Aorta (tissue), 5 donors: ENCODE measurements at regions of chr1 and their contacts with region 1.

Region 1: GRCh38 chr1:40939320-40940059 is 40.0 kb upstream of the CTPS1 start:
- DNase-seq: no peak
- ATAC-seq: peak; percentile 87
- H3K4me3 ChIP-seq: no peak overlapping the region
- H3K27ac ChIP-seq: no peak overlapping the region
- H3K4me1 ChIP-seq: peaks cover 0 to 5% of the 10 kb centered on the region in 2 donors
- H3K27me3 ChIP-seq: no peaks in the 10 kb centered on the region

Region 2: DNA sequence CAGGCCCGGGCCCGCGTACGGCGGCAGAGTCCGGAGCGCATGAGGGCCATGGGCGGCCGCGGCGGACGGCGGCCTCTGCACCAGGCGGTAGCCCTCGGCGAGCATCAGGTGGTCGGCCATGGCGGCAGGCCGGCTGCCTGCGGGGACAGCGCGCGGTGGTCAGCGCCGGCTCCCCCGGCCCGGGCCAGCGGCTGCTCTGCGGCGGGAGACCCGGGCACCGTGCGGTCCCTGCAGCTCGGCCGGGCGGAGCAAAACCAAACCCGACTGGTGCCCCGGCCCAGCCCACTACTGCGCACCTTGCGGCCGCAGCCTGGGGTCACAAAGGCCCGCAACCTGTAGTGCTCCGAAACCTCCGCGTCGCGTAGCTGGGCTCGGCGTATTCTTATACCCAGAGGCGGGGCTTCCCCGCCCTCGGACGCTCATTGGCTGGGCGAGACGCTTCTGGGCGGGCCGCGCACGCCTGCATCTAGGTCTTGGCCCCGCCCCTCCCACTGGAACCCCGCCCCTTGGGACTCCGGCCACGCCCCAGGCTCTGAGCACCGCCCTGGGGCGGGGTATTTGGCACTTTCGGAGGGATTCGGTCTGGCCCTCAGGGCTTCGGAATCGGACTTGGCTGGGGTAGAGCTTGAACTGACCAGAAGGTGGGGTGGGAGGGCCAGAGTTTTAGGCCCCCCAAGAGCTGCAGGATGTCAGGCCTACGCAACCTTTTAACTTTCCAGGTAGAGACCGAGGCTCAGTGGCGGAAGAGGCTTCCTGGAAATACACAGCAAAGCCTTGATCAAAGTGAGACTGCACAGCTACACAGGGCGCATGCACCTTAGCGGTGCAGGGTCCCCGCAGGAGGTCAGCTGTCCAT is 77.3 kb before region 1 on chr1 and contains the start of gene CITED4:
- intact Hi-C with region 1: loop called in 1 of 2 experiments (anchors 2 kb)
- DNase-seq: peak; percentile 97 to 99
- ATAC-seq: peak; percentile 96
- H3K4me3 ChIP-seq: peak within 1 kb of the TSS; percentile 36 to 92
- H3K27ac ChIP-seq: peak within 1 kb of the TSS; percentile 28 to 81
- H3K4me1 ChIP-seq: no peaks in the 10 kb centered on the region
- H3K27me3 ChIP-seq: no peaks in the 10 kb centered on the region
- total RNA-seq, gene CITED4: 13.2 to 19.0 TPM

Region 3: DNA sequence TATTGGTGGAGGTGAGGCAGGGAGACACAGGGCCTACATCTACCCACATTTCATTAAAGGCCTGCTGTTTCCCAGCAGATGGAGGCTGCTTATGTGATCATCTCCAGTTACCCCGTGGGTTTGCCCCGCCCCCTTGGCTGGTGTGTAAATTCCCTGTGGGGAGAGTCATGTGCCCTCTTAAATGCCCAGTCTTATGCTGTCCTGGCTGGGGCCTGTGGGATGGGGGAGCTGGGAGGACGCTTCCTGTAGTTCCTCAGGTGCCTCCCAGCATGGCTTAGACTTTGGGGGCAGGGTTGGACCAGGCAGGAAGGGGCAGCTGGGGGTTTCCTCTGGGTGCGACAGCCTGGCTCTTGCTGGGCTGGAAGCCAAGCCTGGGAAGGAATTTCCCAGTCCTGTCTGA is 61.8 kb before region 1 on chr1:
- intact Hi-C with region 1: loop called (anchors 5 kb)
- DNase-seq: peak; percentile 91 to 93
- ATAC-seq: peak; percentile 78
- H3K4me3 ChIP-seq: no peak overlapping the region
- H3K27ac ChIP-seq: peak overlapping the region in 1 of 2 donors; percentile 78
- H3K4me1 ChIP-seq: no peaks in the 10 kb centered on the region
- H3K27me3 ChIP-seq: no peaks in the 10 kb centered on the region

Region 4: GRCh38 chr1:40901886-40902852 is 37.3 kb before region 1 on chr1:
- intact Hi-C with region 1: loop called (anchors 5 kb)
- DNase-seq: peak; percentile 59 to 85
- ATAC-seq: peak; percentile 60
- H3K4me3 ChIP-seq: no peak overlapping the region
- H3K27ac ChIP-seq: peak overlapping the region in 1 of 2 donors; percentile 15
- H3K4me1 ChIP-seq: peaks cover 2 to 3% of the 10 kb centered on the region in 2 donors
- H3K27me3 ChIP-seq: no peaks in the 10 kb centered on the region

Region 5: DNA sequence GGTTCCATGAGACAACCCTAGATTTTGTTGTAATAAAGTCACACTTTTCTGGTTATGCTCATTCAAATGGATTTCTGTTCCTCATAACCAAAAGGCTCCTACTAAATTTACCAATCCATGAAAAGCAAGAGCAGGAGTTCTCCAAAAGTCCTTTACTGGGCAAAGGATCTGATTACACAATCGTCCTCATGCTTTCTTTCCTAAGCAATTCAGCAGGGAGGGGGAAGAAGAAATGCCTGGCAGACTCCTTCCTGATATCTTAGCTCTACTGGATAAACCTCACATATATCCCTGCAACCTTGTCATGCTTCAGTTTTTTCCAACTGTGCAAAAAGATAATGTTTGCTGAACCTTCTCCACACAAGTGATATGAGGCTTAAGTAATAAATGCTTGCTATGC is 1146.1 kb after region 1 on chr1:
- intact Hi-C with region 1: no loop called
- DNase-seq: no peak
- ATAC-seq: peak; percentile 36
- H3K4me3 ChIP-seq: no peak overlapping the region
- H3K27ac ChIP-seq: no peak overlapping the region
- H3K4me1 ChIP-seq: no peaks in the 10 kb centered on the region
- H3K27me3 ChIP-seq: no peaks in the 10 kb centered on the region